ENCODE measurements at regions of chr14 and their contacts with region 1.

Region 1: DNA sequence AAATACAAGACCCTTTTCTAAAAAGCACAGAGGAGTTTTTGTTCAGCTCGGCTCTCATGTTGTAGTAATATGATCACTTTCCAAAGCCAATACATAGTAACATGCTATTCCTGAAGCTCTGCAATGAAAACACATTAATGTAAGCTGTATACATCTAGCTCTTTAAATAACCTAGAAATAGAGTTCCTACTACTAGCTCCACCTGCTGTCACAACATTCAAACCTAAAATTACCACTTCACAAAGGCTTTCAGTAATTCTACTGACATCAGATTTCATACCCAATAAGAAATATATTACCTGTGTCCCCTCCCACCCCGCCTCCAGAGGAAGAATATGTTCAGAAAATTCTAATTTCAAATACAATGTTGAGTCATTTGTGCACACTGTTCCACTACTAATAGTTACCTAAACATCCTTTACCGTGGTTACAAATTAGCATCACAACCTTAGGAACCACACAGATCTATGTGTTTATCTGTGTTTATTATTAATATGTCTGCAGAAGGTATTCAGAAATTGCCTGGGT is 17.8 kb downstream of the EFCAB11 start:
- DNase-seq: no peak
- ATAC-seq: no peak
- H3K4me3 ChIP-seq: no peak overlapping the region
- H3K4me3 Mint-ChIP-seq: no peak overlapping the region
- H3K27ac ChIP-seq: no peak overlapping the region
- H3K27ac Mint-ChIP-seq: no peak overlapping the region
- H3K4me1 ChIP-seq: no peaks in the 10 kb centered on the region
- H3K4me1 Mint-ChIP-seq: no peaks in the 10 kb centered on the region
- H3K27me3 ChIP-seq: no peaks in the 10 kb centered on the region
- H3K27me3 Mint-ChIP-seq: peaks cover 0 to 5% (median 0%) of the 10 kb centered on the region in 5 donors

Region 2: DNA sequence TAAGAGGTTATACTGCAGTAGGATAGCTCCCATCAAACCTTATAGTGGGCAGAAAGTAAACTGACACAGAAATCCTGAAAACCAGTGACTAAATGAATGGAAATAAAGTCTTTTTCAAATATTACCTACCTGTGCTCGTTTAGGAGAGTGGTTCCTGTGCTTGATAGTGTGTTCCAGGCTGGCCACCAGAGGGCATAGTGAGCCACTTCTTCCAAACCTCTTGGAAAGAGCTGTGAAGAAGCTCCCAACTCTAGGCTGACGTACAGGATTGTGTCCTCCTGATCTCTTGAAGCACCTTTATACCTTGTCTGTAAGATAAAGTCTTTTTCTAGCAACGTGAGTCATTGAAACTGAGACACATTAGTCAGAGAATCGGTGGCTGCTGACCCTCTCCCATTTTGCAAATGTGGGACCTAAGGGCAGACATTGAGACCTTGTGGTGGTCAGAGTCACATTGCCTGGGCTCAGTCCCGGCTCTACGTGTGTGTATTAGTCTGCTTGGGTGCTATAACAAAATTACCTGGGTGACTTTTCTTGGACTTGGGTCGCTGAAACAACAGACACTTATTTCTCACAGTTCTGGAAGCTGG is 36.6 kb after region 1 on chr14:
- CTCF ChIA-PET with region 1: interaction called, 6 read pairs
- POLR2A ChIA-PET with region 1: no interaction called
- intact Hi-C with region 1: loop called (anchors 1 kb)
- DNase-seq: peak in 7 of 9 donors; percentile 21 to 44 (median 37)
- ATAC-seq: peak; percentile 76
- H3K4me3 ChIP-seq: no peak overlapping the region
- H3K4me3 Mint-ChIP-seq: no peak overlapping the region
- H3K27ac ChIP-seq: no peak overlapping the region
- H3K27ac Mint-ChIP-seq: no peak overlapping the region
- H3K4me1 ChIP-seq: no peaks in the 10 kb centered on the region
- H3K4me1 Mint-ChIP-seq: peaks cover 0 to 19% (median 3%) of the 10 kb centered on the region in 7 donors
- H3K27me3 ChIP-seq: no peaks in the 10 kb centered on the region
- H3K27me3 Mint-ChIP-seq: no peaks in the 10 kb centered on the region